ENCODE measurements at regions of chr9 and their contacts with region 1.

Region 1: GRCh38 chr9:102631559-102631958 is 363.6 kb upstream of the CYLC2 start:
- DNase-seq: no peak
- ATAC-seq: no peak
- H3K4me3 Mint-ChIP-seq: no peak overlapping the region
- H3K27ac Mint-ChIP-seq: no peak overlapping the region
- H3K4me1 Mint-ChIP-seq: no peaks in the 10 kb centered on the region
- H3K27me3 Mint-ChIP-seq: no peaks in the 10 kb centered on the region

Region 2: GRCh38 chr9:102049586-102050246 is 581.8 kb before region 1 on chr9:
- CTCF ChIA-PET with region 1: no interaction called
- POLR2A ChIA-PET with region 1: no interaction called
- intact Hi-C with region 1: no loop called
- DNase-seq: no peak
- ATAC-seq: no peak
- H3K4me3 Mint-ChIP-seq: no peak overlapping the region
- H3K27ac Mint-ChIP-seq: no peak overlapping the region
- H3K4me1 Mint-ChIP-seq: no peaks in the 10 kb centered on the region
- H3K27me3 Mint-ChIP-seq: no peaks in the 10 kb centered on the region

Region 3: DNA sequence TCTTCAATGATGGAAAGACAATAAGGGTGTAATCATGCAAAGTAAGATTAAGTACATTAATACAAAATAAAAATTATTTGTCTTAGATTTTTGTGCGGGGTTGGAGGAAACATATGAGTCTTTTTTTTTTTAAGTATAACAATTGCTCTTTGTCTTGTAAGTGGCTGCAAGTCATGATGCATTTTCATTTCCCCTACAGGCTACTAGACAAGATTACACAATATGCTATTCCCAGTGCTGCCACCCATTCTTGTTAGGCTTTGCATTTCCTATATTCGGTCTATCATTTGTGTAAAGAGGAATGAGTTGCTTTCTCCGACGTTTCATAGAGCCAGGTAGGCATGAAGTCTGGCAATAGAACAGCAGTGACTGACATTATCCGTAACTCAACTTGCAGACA is 69.4 kb after region 1 on chr9:
- CTCF ChIA-PET with region 1: no interaction called
- POLR2A ChIA-PET with region 1: no interaction called
- intact Hi-C with region 1: loop called in 1 of 2 experiments (anchors 10 kb)
- DNase-seq: no peak
- ATAC-seq: no peak
- H3K4me3 Mint-ChIP-seq: no peak overlapping the region
- H3K27ac Mint-ChIP-seq: no peak overlapping the region
- H3K4me1 Mint-ChIP-seq: no peaks in the 10 kb centered on the region
- H3K27me3 Mint-ChIP-seq: no peaks in the 10 kb centered on the region

Region 4: GRCh38 chr9:102796244-102796643 is 164.7 kb after region 1 on chr9:
- CTCF ChIA-PET with region 1: no interaction called
- POLR2A ChIA-PET with region 1: no interaction called
- intact Hi-C with region 1: no loop called
- DNase-seq: no peak
- ATAC-seq: no peak
- H3K4me3 Mint-ChIP-seq: no peak overlapping the region
- H3K27ac Mint-ChIP-seq: no peak overlapping the region
- H3K4me1 Mint-ChIP-seq: no peaks in the 10 kb centered on the region
- H3K27me3 Mint-ChIP-seq: no peaks in the 10 kb centered on the region

Measured in activated CD4-positive, alpha-beta T cell treated with anti-CD3 and anti-CD28 coated beads for 36 hours (primary cell).